Right ventricle myocardium inferior (tissue), 1 donor: ENCODE measurements at regions of chr3 and their contacts with region 1.

Region 1: DNA sequence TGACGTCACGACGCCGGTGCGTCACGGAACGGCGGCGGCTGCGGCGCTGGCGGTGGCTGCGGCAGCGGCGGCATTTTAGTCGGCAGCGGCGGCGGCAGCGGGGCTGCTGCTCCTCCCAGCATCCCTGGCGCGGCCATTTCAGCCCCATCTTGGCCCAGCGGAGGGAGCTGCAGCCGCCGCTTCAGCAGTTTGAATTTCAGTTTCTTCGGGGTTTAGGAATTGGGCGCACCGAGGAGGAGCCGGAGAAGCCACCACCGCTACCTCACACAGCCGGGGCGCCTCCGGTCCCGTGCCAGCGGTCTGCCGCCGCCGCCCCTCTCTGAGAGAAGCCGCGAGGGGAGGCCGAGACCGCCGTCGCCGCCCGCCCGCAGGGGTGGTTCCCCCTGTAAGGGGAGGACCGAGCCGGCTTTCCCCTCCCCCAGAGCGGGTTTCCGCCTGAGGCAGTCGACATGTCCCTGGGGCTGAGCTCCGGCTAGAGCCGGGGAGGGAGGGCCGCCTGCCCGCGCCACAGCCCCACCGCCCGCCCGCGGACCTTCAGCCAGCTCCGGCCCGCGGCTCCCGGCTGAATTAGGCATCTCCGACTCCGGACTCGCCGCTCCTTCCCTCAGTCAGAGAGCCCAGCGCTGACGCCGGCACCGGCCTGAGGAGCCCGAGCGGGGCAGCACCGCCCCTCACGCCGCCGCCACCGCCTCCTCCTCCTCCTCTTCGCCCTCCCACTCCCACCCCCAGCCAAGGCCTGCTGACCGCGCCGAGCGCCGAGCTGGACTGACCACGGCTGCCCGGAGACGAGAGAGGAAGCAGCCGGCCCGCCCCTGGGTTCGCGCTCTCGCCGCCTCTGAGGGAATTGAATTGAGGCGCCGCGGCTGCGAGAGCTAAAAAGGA is at the start of gene TSC22D2:
- DNase-seq: peak; percentile 98
- ATAC-seq: peak; percentile 91
- total RNA-seq, gene TSC22D2: 19.8 TPM

Region 2: DNA sequence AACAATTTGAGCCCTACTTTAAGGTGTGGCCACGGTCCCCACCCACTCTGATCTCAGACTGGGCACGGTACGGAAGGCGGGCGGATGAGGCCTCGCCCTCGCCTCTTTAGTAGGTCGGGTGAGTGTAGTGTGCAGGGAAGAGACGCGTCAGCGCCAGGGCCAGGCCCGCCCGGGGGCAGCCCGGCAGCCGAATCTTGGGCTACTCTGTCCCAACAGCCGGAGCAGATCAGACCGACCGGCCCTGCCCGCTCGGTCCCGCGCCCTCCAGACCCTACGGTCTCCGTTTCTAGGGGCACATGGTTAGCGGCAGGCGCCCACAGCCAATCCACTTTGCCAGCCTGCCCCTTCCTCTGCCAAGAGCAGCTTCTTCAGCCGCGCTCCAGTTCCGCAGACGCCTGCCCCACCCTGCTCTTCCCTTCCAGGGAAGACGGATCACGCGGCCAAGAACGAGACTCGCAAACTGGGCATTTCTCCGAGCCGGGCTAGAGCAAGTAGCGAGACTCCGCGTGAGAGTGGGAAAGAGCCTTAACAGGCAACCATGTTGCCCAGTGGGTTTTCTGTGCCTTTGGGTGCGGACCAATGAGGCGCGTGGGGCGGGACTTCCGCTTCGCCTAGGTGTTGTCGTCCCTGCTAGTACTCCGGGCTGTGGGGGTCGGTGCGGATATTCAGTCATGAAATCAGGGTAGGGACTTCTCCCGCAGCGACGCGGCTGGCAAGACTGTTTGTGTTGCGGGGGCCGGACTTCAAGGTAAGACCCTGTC is 595.7 kb before region 1 on chr3 and contains the start of gene RNF13:
- intact Hi-C with region 1: loop called (anchors 2 kb)
- DNase-seq: peak; percentile 99
- ATAC-seq: peak; percentile 96
- total RNA-seq, gene RNF13: 45.5 TPM

Region 3: GRCh38 chr3:150146991-150147761 is 261.3 kb before region 1 on chr3:
- intact Hi-C with region 1: no loop called
- DNase-seq: peak; percentile 60
- ATAC-seq: peak; percentile 37

Region 4: GRCh38 chr3:150253622-150254021 is 154.8 kb before region 1 on chr3:
- intact Hi-C with region 1: loop called (anchors 10 kb)
- DNase-seq: no peak
- ATAC-seq: no peak

Region 5: DNA sequence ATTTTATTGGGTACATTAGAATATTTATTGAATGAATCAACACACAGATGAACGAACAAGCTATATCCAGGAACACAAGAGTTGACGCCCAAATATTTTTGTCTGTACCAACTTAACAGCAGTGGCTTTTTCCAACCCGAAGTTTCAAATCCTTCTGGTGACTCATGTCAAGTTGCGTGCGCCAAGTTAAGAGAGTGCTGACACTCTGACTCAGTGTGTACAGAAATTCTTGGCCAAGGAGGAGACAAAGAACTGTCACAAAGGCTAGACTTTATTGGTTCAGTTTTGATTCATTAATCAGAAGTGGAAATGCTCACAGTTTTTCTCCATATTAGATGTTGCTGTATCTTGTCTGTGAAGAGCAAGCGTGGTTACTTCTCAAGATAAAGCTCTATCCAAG is 60.0 kb before region 1 on chr3:
- intact Hi-C with region 1: loop called (anchors 2 kb)
- DNase-seq: no peak
- ATAC-seq: peak; percentile 77

Region 6: DNA sequence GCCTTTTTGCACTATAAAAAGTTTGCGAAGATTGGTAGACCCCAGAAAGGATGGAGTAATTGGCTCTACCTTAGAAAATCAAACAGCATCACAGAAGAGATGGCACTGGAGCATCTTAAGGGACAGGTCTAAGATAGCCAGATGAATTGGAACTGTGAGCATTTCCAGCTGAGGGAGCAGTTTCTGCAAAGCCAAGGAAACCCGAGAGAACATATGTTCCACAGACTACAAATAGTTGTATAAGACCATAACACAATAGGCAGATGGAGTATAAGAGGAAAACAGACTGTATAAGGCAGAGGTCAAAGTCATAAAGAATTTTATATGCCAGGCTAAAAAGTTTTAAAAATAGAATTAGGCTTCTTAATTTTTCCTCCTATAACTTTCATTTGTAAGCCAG is 45.6 kb after region 1 on chr3:
- intact Hi-C with region 1: loop called (anchors 2 kb)
- DNase-seq: no peak
- ATAC-seq: no peak

Region 7: GRCh38 chr3:150546226-150547044 is 138.0 kb after region 1 on chr3 and contains the starts of genes EIF2A and SERP1:
- intact Hi-C with region 1: loop called (anchors 2 kb)
- DNase-seq: peak; percentile 99
- ATAC-seq: peak; percentile 98
- total RNA-seq, gene EIF2A: 68.9 TPM
- total RNA-seq, gene SERP1: 23.7 TPM

Region 8: DNA sequence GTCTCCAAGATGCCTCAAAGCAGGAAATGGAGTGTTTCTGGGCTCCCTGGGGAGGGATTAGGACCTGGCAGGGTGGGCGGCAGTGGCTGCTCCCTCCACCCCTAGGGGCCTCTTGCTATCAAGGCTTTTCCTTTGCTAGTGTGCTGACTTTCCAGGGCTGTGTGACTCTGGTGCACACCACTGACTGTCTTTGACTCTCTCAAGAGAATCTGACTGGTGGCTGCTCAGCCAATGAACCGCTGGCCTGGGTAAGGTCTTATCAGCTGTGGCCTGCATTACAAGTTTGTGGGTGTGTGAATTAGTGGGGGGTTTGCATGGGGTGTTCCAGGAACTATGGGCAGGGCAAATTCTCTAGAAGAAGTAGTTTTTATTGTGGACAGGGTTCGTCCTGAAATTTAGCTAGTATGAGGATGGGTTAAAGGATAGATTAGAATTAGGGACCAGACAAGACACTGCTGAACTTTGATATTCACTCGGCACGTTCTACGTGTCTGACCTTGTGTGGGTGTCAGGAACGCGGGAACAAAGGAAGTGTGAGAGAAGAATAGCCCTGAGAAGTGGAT is 325.0 kb after region 1 on chr3:
- intact Hi-C with region 1: no loop called
- DNase-seq: no peak
- ATAC-seq: peak; percentile 30